ENCODE measurements at regions of chr9 and their contacts with region 1.

Region 1: GRCh38 chr9:27333241-27334052 is 36.5 kb upstream of the EQTN start:
- DNase-seq: peak; percentile 49 to 74
- ATAC-seq: peak; percentile 86 to 97 (median 93)
- H3K4me3 ChIP-seq: no peak overlapping the region
- H3K27ac ChIP-seq: peak overlapping the region; percentile 2
- H3K4me1 ChIP-seq: peaks cover 16% of the 10 kb centered on the region
- H3K27me3 ChIP-seq: no peaks in the 10 kb centered on the region
- CTCF ChIP-seq: peak; percentile 92

Region 2: GRCh38 chr9:27371382-27371781 is 37.9 kb after region 1 on chr9:
- intact Hi-C with region 1: loop called in 1 of 2 experiments (anchors 5 kb)
- DNase-seq: no peak
- ATAC-seq: peak; percentile 79 to 88 (median 86)
- H3K4me3 ChIP-seq: peak overlapping the region; percentile 50
- H3K27ac ChIP-seq: peak overlapping the region; percentile 34
- H3K4me1 ChIP-seq: peaks cover 48% of the 10 kb centered on the region
- H3K27me3 ChIP-seq: no peaks in the 10 kb centered on the region
- CTCF ChIP-seq: no peak

Region 3: GRCh38 chr9:27394154-27394825 is 60.8 kb after region 1 on chr9:
- intact Hi-C with region 1: loop called in 1 of 2 experiments (anchors 10 kb)
- DNase-seq: no peak
- ATAC-seq: no peak
- H3K4me3 ChIP-seq: no peak overlapping the region
- H3K27ac ChIP-seq: no peak overlapping the region
- H3K4me1 ChIP-seq: no peaks in the 10 kb centered on the region
- H3K27me3 ChIP-seq: no peaks in the 10 kb centered on the region
- CTCF ChIP-seq: no peak

Region 4: DNA sequence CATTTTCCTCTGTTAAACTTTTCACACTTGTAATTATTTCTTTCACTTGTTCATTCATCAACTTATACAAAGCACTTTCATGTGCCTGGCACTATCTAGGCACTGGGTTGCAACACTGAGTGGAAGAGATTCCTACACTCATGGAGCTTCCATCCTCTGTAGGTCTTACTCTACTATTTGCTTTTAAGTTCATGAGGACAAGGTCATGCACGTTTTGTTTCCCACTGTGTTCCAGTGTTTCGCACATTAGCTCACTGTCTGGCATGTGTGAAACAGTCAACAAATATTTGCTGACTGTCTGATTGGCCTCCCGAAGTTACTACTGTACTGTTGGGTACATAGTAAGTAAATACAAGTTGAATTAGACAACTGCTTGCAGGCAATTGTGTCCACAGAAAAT is 102.8 kb after region 1 on chr9:
- intact Hi-C with region 1: loop called in 1 of 2 experiments (anchors 10 kb)
- DNase-seq: no peak
- ATAC-seq: peak in 2 of 4 donors; percentile 50 to 55
- H3K4me3 ChIP-seq: no peak overlapping the region
- H3K27ac ChIP-seq: no peak overlapping the region
- H3K4me1 ChIP-seq: peaks cover 2% of the 10 kb centered on the region
- H3K27me3 ChIP-seq: no peaks in the 10 kb centered on the region
- CTCF ChIP-seq: no peak

Region 5: DNA sequence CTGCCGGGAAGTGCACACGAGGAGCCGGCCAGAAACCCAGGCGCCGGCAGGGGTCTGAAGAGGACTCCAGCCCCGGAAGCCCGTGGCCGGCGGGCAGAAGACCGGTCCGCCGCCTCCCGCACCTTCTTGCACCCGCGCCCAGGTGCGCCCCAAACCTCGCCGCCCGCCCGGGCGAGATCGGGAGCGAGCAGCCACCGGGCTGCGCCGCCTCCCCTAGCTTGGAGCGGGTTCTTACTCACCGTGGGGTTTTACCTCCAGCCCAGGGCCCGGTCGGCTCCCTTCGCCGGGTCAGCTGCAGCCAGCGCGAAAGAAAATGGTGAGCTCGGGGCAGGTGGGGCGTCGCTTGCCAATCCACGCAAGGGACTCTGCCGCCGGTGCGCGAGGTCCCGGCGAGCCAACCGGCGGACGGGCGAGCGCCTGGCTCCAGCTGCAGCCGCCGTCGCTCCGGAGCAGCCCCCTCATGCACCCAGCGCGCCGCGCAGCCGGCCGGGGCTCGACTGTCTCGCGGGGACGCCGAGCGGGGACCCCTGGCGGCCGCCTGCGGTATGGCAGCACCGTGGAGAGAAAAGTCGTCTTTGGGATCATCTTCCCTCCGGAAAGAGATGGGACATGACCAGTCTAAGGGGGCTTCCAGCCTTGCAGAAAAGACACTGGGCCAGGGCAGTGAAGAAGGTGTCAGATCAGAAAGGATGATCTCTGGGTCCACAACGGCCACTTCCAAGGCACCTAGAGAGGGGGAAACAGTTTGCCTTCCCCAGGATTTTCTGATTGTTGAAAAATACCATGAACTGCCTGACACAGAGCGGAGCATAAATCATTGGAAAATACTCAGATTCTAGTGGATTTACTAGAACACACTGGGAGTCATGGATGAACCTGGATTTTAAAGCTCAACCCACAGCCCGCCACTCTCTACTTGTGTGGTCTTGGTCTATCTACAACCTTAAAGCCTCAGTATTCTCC is 196.2 kb after region 1 on chr9 and contains the start of gene MOB3B:
- intact Hi-C with region 1: loop called (anchors 2 kb)
- DNase-seq: peak; percentile 85 to 93
- ATAC-seq: peak; percentile 89 to 94 (median 92)
- H3K4me3 ChIP-seq: peak within 1 kb of the TSS; percentile 83
- H3K27ac ChIP-seq: peak within 1 kb of the TSS; percentile 77
- H3K4me1 ChIP-seq: no peaks in the 10 kb centered on the region
- H3K27me3 ChIP-seq: no peaks in the 10 kb centered on the region
- CTCF ChIP-seq: peak; percentile 97
- total RNA-seq, gene MOB3B: 1.1 to 4.5 (median 1.9) TPM

Region 6: DNA sequence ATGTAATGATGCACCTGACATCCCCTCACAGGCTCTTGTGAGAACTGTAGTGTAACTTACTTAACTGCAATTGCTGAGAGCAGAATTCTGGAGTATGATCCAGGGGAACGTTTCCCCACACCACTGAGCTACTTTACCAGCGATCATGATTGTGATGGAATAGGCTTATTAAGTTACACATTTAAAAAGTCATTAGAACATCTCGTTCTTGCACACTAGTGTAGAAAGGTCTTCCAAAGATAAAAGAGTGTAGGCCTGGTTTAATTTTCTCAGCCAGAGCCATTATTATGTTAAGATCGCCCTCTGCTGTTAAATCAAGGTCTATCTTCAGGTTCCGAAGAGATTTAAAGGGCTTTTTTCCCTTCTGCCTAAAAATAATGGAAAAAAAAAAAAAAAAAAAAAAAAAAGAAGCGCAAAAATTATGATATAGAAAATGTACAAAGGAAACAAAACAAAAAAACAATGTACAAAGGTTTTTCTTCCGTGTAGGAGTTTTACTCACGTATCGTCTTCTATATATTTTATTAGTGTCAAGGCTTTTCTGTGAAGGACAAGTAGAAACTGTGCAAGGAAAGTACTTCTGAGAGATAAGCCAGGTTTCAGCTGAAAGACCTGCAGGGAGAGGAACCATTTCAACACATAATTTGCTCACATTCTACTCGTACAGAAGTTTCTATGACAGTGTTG is 214.8 kb after region 1 on chr9:
- intact Hi-C with region 1: loop called (anchors 1 to 5 kb)
- DNase-seq: no peak
- ATAC-seq: peak; percentile 79 to 90 (median 86)
- H3K4me3 ChIP-seq: no peak overlapping the region
- H3K27ac ChIP-seq: peak overlapping the region; percentile 24
- H3K4me1 ChIP-seq: peaks cover 27% of the 10 kb centered on the region
- H3K27me3 ChIP-seq: no peaks in the 10 kb centered on the region
- CTCF ChIP-seq: peak; percentile 52

Region 7: GRCh38 chr9:27554712-27555111 is 221.3 kb after region 1 on chr9:
- intact Hi-C with region 1: loop called in 1 of 2 experiments (anchors 5 kb)
- DNase-seq: no peak
- ATAC-seq: no peak
- H3K4me3 ChIP-seq: no peak overlapping the region
- H3K27ac ChIP-seq: no peak overlapping the region
- H3K4me1 ChIP-seq: no peaks in the 10 kb centered on the region
- H3K27me3 ChIP-seq: no peaks in the 10 kb centered on the region
- CTCF ChIP-seq: no peak